ENCODE measurements at regions of chr9 and their contacts with region 1.

Region 1: DNA sequence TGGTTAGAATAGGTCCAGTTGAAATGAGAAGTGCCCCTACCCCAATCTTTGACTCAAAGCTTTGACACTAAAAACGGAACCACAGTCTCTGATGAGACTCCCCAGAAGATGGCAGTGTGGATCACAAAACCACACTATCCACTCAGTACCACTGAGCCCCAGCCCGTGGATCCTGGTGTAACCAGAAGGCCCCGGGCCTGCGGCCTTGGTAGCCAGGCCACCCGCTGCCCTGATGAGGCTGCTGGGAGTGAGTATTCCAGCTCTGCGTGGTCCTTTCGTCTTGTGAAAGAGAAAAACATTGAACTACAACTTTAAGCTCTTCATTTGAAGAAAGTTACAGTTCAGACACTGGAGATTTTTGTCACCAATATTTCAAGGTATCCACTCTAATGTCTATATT is 42.2 kb upstream of the FBP1 start:
- DNase-seq: peak; percentile 69
- H3K4me3 Mint-ChIP-seq: no peak overlapping the region
- H3K27ac Mint-ChIP-seq: no peak overlapping the region
- H3K4me1 Mint-ChIP-seq: no peaks in the 10 kb centered on the region
- H3K27me3 Mint-ChIP-seq: peaks cover 28% of the 10 kb centered on the region

Region 2: DNA sequence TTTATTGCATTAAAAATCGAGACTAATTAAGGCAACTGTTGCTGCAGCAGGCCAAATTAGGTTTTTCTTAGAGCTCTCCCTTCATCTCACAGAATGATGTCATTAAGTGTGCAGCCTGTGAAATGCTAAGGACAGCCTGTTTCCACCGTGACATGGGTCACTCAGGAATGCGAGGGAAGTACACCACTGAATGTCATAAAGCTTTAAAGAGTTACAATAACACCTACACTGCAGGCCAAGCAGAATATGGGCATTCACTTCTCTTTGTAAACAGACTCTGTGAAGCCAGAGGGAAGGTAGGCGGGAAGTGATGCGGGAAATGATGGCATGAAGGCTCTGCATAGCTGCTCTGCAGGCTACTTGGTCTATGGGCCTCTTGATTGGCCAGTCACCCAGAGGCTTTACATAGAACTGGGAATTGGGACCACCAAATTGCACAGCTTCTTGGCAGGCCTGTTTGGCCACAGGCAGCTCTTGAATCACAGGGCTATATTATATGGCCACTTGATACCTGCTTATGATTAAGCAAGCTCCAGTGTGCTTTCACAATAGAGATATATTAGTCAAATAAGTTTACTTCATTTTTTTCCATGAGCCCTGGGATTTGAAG is 16.6 kb after region 1 on chr9:
- CTCF ChIA-PET with region 1: interaction called, 10 read pairs
- DNase-seq: no peak
- H3K4me3 Mint-ChIP-seq: no peak overlapping the region
- H3K27ac Mint-ChIP-seq: no peak overlapping the region
- H3K4me1 Mint-ChIP-seq: no peaks in the 10 kb centered on the region
- H3K27me3 Mint-ChIP-seq: peaks cover 12% of the 10 kb centered on the region

Region 3: GRCh38 chr9:95127249-95128176 is 446.0 kb after region 1 on chr9:
- CTCF ChIA-PET with region 1: interaction called, 164 read pairs
- DNase-seq: peak; percentile 82
- H3K4me3 Mint-ChIP-seq: no peak overlapping the region
- H3K27ac Mint-ChIP-seq: no peak overlapping the region
- H3K4me1 Mint-ChIP-seq: peaks cover 2% of the 10 kb centered on the region
- H3K27me3 Mint-ChIP-seq: peaks cover 4% of the 10 kb centered on the region

Region 4: GRCh38 chr9:95167998-95168397 is 486.5 kb after region 1 on chr9:
- CTCF ChIA-PET with region 1: interaction called, 18 read pairs
- DNase-seq: peak; percentile 73
- H3K4me3 Mint-ChIP-seq: no peak overlapping the region
- H3K27ac Mint-ChIP-seq: no peak overlapping the region
- H3K4me1 Mint-ChIP-seq: peaks cover 14% of the 10 kb centered on the region
- H3K27me3 Mint-ChIP-seq: no peaks in the 10 kb centered on the region

Measured in activated naive CD4-positive, alpha-beta T cell treated with anti-CD3 and anti-CD28 coated beads, Interleukin-2, amount 10 ng/mL, durations not matched to agents 7 days and 5 days (primary cell).